Lower leg skin (tissue), 4 donors: ENCODE measurements at regions of chr13 and their contacts with region 1.

Region 1: DNA sequence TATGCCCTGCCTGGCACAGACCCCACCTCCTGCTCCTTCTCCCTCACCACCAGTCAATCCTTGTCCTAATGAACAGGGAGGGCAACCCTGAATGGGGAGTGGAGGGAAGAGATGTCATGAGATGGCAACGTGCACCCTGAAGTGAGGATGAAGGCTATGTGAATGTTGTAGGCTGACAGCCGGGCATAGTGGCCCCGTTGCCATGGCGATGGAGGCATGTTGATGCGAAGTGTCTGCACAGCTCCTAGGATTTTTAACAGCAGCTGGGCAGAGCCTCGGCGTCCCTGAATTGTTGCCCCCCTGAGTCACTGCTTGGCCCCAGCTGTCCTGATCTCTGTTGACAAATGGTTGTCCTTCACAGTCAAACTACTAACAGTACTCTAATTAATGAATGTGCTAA is 4.8 kb upstream of the ALOX5AP start:
- DNase-seq: no peak
- H3K4me3 ChIP-seq: no peak overlapping the region
- CTCF ChIP-seq: no peak
- POLR2A ChIP-seq: no peak

Region 2: GRCh38 chr13:30422054-30422839 is 308.3 kb before region 1 on chr13 and contains the start of gene UBE2L5:
- intact Hi-C with region 1: no loop called
- DNase-seq: peak; percentile 70 to 95
- H3K4me3 ChIP-seq: peak within 1 kb of the TSS; percentile 27
- CTCF ChIP-seq: no peak
- POLR2A ChIP-seq: peak in 1 of 2 donors; percentile 10
- total RNA-seq, gene UBE2L5: 0.13 to 0.20 TPM in 2 of 4 donors, not detected in the others

Region 3: DNA sequence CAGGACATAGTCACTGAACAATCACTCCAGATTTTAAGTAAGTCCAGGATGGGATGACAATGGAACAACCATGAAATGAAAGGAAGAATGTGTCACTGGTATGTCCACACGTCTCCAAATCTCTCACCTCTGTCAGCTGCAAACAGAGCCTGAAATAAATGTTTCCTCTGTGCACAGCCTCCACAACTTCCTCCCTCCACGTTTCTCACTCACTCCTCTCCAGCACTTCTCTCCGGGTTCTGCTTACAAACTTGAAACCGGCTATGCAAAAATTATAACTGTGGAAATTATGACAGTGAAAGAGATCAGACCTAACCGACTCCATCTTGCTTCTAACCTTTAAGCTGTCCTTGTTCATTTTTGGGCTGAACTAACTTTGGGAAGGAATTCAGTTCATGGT is 30.2 kb before region 1 on chr13:
- intact Hi-C with region 1: loop called (anchors 1 kb)
- DNase-seq: no peak
- H3K4me3 ChIP-seq: no peak overlapping the region
- CTCF ChIP-seq: no peak
- POLR2A ChIP-seq: no peak